Panc1 (cell line): ENCODE measurements at regions of chr11 and their contacts with region 1.

Region 1: GRCh38 chr11:41519696-41520095 is 60.2 kb upstream of the LRRC4C start:
- DNase-seq: no peak
- ATAC-seq: no peak
- H3K4me3 ChIP-seq: no peak overlapping the region
- H3K27ac ChIP-seq: no peak overlapping the region
- H3K4me1 ChIP-seq: no peaks in the 10 kb centered on the region
- H3K27me3 ChIP-seq: no peaks in the 10 kb centered on the region
- CTCF ChIP-seq: no peak

Region 2: DNA sequence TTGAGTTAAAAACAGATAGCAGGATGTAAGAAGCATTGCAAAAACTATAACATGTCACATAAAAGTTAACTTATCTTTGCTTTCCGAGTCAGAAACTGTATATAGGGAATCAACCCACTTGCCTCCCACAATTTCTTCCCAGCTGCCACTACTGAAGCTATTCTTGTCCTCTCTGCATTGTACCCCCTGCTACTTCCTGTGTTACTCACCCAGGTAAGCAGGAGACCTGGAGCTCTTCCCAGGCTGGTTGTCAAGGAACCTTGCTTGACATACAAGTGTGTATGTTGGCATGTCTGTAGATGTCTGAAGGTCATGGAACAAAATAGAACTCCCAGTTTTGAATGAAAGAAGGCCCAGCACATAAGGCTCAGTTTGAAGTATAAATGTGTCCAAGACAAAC is 14.1 kb after region 1 on chr11:
- CTCF ChIA-PET with region 1: no interaction called
- POLR2A ChIA-PET with region 1: interaction called, 17 read pairs
- in situ Hi-C with region 1: no loop called
- intact Hi-C with region 1: no loop called
- DNase-seq: no peak
- ATAC-seq: no peak
- H3K4me3 ChIP-seq: no peak overlapping the region
- H3K27ac ChIP-seq: no peak overlapping the region
- H3K4me1 ChIP-seq: no peaks in the 10 kb centered on the region
- H3K27me3 ChIP-seq: no peaks in the 10 kb centered on the region
- CTCF ChIP-seq: no peak

Region 3: GRCh38 chr11:41578421-41579051 is 58.8 kb after region 1 on chr11:
- CTCF ChIA-PET with region 1: no interaction called
- POLR2A ChIA-PET with region 1: no interaction called
- in situ Hi-C with region 1: no loop called
- intact Hi-C with region 1: no loop called
- DNase-seq: no peak
- ATAC-seq: no peak
- H3K4me3 ChIP-seq: peak overlapping the region in 1 of 2 experiments; percentile 26; a peak in 1 of 4 replicates
- H3K27ac ChIP-seq: no peak overlapping the region
- H3K4me1 ChIP-seq: no peaks in the 10 kb centered on the region
- H3K27me3 ChIP-seq: no peaks in the 10 kb centered on the region
- CTCF ChIP-seq: no peak